Activated naive CD4-positive, alpha-beta T cell treated with anti-CD3 and anti-CD28 coated beads for 36 hours (primary cell): ENCODE measurements at regions of chr4 and their contacts with region 1.

Region 1: DNA sequence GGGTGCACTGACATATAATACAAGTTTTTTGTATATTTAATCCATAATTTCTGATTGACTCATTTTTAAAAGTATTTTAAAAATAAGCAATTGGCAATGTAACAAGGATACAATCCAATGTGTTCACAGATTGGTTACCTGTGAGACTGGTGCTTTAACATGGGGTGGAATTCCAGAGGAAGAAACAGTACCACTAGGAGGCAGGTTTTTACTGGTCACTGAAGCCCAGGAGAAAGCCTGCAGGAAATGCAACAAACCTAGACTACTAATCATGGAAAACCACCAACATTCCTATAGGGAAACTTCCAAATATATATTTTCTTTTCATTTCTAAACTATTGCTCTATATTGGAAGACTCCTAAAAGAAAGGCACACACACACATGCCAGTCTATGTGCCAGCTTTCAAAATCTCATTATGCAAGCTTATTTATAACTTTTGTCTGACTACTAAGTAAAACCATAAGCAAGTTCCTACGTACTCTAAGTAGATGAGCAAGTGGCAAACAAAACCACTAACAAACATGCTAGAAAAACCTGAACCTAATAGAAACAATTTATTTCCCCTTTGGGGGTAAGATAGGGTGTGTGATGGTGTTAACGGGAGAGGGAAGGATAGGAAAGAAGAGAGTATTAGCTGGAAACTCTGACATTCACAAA is 19.2 kb downstream of the G3BP2 start:
- DNase-seq: no peak
- H3K4me3 Mint-ChIP-seq: no peak overlapping the region
- H3K27ac Mint-ChIP-seq: peak overlapping the region; percentile 78
- H3K4me1 Mint-ChIP-seq: peaks cover 43% of the 10 kb centered on the region
- H3K27me3 Mint-ChIP-seq: no peaks in the 10 kb centered on the region

Region 2: DNA sequence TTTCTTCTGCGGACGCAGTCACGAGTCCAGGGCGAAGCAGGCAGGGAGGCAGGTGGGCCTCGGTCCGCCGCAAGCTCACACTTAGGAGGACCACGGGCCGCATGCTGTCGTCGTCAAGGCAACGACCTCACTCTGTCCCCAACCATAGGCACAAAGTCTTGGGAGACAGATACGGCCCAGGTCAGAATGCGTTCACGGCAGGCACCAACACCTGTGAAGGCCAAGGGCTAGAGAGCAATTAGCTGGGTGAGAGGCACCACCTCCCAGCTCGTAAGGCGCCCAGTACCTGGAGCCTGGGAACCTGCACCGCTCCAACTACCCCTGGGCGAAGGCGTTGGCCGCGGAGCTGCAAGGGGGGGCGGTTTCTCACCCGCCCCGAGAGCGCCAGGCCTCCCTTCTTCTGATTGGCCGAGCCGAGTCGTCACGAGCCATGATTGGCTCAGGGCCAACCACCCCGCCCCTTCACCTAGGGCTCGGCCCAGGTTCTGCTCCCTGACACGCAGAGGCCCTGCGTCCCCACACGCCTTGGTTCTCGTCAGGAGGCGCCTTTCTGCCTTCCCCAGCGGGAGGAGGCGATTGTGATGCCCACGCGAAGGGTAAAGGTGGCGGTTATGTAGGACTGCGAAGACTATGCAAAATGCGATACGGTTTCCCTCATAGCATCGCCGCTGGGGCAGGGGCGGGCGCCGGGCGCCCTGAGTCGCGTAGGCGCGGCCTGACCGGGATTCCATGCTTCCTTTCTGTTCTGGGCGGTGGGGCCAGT is 23.6 kb before region 1 on chr4 and contains the start of gene CDKL2:
- CTCF ChIA-PET with region 1: interaction called, 3 read pairs
- intact Hi-C with region 1: loop called (anchors 1 kb)
- DNase-seq: peak; percentile 91
- H3K4me3 Mint-ChIP-seq: peak within 1 kb of the TSS; percentile 72
- H3K27ac Mint-ChIP-seq: no peak within 1 kb of the TSS
- H3K4me1 Mint-ChIP-seq: peaks cover 5% of the 10 kb centered on the region
- H3K27me3 Mint-ChIP-seq: no peaks in the 10 kb centered on the region
- total RNA-seq, gene CDKL2: 0.79 to 1.2 TPM

Region 3: GRCh38 chr4:75666299-75666698 is 12.3 kb after region 1 on chr4:
- CTCF ChIA-PET with region 1: interaction called, 8 read pairs
- intact Hi-C with region 1: loop called (anchors 1 kb)
- DNase-seq: no peak
- H3K4me3 Mint-ChIP-seq: peak overlapping the region; percentile 44
- H3K27ac Mint-ChIP-seq: peak overlapping the region; percentile 84
- H3K4me1 Mint-ChIP-seq: peaks cover 77% of the 10 kb centered on the region
- H3K27me3 Mint-ChIP-seq: no peaks in the 10 kb centered on the region

Region 4: GRCh38 chr4:75698162-75698962 is 44.4 kb after region 1 on chr4:
- CTCF ChIA-PET with region 1: no interaction called
- intact Hi-C with region 1: loop called (anchors 2 kb)
- DNase-seq: peak; percentile 38
- H3K4me3 Mint-ChIP-seq: no peak overlapping the region
- H3K27ac Mint-ChIP-seq: peak overlapping the region; percentile 11
- H3K4me1 Mint-ChIP-seq: peaks cover 29% of the 10 kb centered on the region
- H3K27me3 Mint-ChIP-seq: no peaks in the 10 kb centered on the region

Region 5: DNA sequence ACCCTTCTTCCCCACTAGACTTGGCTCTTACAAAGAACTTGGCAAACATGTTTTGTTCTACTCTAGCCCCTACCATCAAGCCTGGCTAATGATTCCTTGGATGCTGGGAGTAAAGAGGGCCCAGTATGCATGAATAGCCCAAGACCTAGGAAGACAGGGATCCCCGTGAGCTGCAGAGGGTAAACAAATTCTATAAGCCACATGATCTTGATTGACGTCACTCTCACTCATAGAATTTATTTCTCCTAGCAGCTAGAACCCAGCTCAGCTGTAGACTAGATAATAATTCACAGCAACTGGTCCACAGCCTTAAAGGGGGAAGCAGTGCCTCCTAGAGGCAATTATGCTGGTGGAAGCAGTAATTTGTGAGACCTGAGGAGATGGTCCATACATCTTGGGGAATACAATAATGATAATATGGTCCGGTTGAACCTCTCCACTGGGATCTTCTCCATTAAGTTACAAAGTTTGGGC is 54.3 kb after region 1 on chr4:
- CTCF ChIA-PET with region 1: interaction called, 4 read pairs
- intact Hi-C with region 1: loop called (anchors 1 kb)
- DNase-seq: peak; percentile 58
- H3K4me3 Mint-ChIP-seq: no peak overlapping the region
- H3K27ac Mint-ChIP-seq: no peak overlapping the region
- H3K4me1 Mint-ChIP-seq: peaks cover 3% of the 10 kb centered on the region
- H3K27me3 Mint-ChIP-seq: no peaks in the 10 kb centered on the region

Region 6: DNA sequence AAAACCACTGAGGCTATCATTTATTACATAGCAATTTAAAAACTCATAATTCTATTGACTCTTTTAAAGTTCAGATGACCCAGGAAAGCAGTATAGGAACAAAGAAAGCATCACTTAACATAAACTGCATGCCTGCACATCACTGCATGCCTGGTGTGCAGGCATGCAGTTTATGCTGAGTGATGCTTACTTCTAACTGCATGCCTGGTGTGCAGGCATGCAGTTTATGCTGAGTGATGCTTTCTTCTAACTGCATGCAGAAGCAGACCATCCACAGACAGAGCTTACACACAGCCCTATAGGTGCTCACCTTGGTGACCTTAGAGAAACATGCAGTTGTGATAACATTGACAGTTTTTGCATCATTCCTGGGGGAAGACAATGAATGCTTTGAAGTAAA is 319.8 kb after region 1 on chr4:
- CTCF ChIA-PET with region 1: no interaction called
- intact Hi-C with region 1: no loop called
- DNase-seq: no peak
- H3K4me3 Mint-ChIP-seq: no peak overlapping the region
- H3K27ac Mint-ChIP-seq: no peak overlapping the region
- H3K4me1 Mint-ChIP-seq: no peaks in the 10 kb centered on the region
- H3K27me3 Mint-ChIP-seq: no peaks in the 10 kb centered on the region